Transverse colon (tissue), 4 donors: ENCODE measurements at regions of chr21 and their contacts with region 1.

Region 1: GRCh38 chr21:45973659-45974072 is 7.9 kb upstream of the COL6A1 start:
- DNase-seq: peak; percentile 76
- H3K4me3 ChIP-seq: peak overlapping the region; percentile 12 to 57 (median 35)
- H3K27ac ChIP-seq: peak overlapping the region; percentile 87 to 96 (median 90)
- H3K4me1 ChIP-seq: peaks cover 45 to 67% (median 49%) of the 10 kb centered on the region in 4 donors
- H3K27me3 ChIP-seq: peaks cover 57% of the 10 kb centered on the region
- CTCF ChIP-seq: peak; percentile 56 to 67 (median 61)
- EP300 ChIP-seq: no peak
- POLR2A ChIP-seq: peak; percentile 15

Region 2: GRCh38 chr21:45820171-45821091 is 153.2 kb before region 1 on chr21:
- in situ Hi-C with region 1: no loop called
- intact Hi-C with region 1: no loop called
- DNase-seq: peak; percentile 77
- H3K4me3 ChIP-seq: no peak overlapping the region
- H3K27ac ChIP-seq: no peak overlapping the region
- H3K4me1 ChIP-seq: peaks cover 0 to 4% (median 0%) of the 10 kb centered on the region in 4 donors
- H3K27me3 ChIP-seq: no peaks in the 10 kb centered on the region
- CTCF ChIP-seq: peak; percentile 83 to 90 (median 83)
- EP300 ChIP-seq: no peak
- POLR2A ChIP-seq: no peak

Region 3: DNA sequence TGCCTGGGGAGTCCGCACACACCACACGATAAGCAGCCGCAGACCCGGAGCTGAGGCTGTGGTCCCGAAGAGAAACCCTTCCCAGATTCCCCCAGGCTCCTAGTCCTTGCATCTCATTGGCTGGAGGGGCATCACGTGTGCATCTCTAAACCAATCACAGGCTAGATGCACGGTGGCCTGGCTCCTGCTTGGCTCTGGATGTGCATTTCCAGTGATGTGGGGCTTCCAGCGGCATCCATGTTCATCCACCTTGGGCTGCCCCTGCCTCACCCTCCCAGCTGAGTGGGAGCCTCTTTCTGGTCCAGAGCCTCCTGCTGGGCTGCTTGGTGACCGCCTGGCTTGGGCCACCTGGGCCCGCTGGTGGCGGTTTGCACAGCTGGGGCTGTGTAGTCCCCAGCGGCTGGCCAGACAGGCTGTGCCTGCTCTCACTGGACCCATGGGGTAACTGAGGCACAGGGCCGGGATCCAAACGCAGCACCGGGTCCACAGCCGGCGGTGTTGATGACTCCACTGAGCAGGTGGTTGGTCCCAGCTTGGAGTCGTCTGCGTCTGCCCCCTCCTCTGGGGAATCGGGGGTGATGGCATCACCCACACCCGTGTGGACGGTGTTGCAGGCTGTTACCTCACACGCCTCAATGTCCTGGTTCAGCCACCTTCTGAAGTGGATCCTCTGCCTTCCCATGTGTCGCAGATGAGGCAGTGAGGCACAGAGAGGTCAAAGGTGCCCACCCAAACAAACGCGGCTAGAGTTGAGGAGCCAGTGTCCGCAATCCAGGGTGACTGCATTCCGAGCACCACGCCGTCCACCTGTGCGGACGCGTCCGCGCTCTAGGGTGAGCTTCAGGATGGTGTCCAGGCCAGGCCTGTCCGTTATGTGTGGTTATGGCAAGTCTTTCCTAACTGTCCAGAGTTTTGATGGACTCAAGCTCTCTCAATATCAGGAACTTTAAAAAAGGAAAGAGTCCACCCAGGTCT is 49.2 kb after region 1 on chr21:
- in situ Hi-C with region 1: no loop called
- intact Hi-C with region 1: loop called (anchors 10 kb)
- DNase-seq: no peak
- H3K4me3 ChIP-seq: no peak overlapping the region
- H3K27ac ChIP-seq: peak overlapping the region; percentile 82 to 90 (median 86)
- H3K4me1 ChIP-seq: peaks cover 15 to 52% (median 16%) of the 10 kb centered on the region in 4 donors
- H3K27me3 ChIP-seq: no peaks in the 10 kb centered on the region
- CTCF ChIP-seq: no peak
- EP300 ChIP-seq: no peak
- POLR2A ChIP-seq: no peak

Region 4: GRCh38 chr21:46097336-46098293 is 123.9 kb after region 1 on chr21 and contains the start of gene COL6A2:
- in situ Hi-C with region 1: loop called in 1 of 4 experiments (anchors 25 kb)
- intact Hi-C with region 1: loop called (anchors 1 kb)
- DNase-seq: peak; percentile 52
- H3K4me3 ChIP-seq: peak within 1 kb of the TSS; percentile 55 to 83 (median 65)
- H3K27ac ChIP-seq: peak within 1 kb of the TSS; percentile 89 to 98 (median 94)
- H3K4me1 ChIP-seq: peaks cover 12 to 21% (median 18%) of the 10 kb centered on the region in 4 donors
- H3K27me3 ChIP-seq: peaks cover 53% of the 10 kb centered on the region
- CTCF ChIP-seq: peak in 2 of 5 experiments; percentile 29 to 31
- EP300 ChIP-seq: no peak
- POLR2A ChIP-seq: peak; percentile 57
- total RNA-seq, gene COL6A2: 172 to 550 (median 346) TPM

Region 5: GRCh38 chr21:46110499-46111192 is 137.0 kb after region 1 on chr21:
- in situ Hi-C with region 1: loop called in 1 of 4 experiments (anchors 25 kb)
- intact Hi-C with region 1: loop called (anchors 5 kb)
- DNase-seq: peak; percentile 26
- H3K4me3 ChIP-seq: no peak overlapping the region
- H3K27ac ChIP-seq: peak overlapping the region in 3 of 4 donors; percentile 52 to 69 (median 69)
- H3K4me1 ChIP-seq: peaks cover 13 to 27% (median 18%) of the 10 kb centered on the region in 4 donors
- H3K27me3 ChIP-seq: no peaks in the 10 kb centered on the region
- CTCF ChIP-seq: no peak
- EP300 ChIP-seq: no peak
- POLR2A ChIP-seq: no peak

Region 6: DNA sequence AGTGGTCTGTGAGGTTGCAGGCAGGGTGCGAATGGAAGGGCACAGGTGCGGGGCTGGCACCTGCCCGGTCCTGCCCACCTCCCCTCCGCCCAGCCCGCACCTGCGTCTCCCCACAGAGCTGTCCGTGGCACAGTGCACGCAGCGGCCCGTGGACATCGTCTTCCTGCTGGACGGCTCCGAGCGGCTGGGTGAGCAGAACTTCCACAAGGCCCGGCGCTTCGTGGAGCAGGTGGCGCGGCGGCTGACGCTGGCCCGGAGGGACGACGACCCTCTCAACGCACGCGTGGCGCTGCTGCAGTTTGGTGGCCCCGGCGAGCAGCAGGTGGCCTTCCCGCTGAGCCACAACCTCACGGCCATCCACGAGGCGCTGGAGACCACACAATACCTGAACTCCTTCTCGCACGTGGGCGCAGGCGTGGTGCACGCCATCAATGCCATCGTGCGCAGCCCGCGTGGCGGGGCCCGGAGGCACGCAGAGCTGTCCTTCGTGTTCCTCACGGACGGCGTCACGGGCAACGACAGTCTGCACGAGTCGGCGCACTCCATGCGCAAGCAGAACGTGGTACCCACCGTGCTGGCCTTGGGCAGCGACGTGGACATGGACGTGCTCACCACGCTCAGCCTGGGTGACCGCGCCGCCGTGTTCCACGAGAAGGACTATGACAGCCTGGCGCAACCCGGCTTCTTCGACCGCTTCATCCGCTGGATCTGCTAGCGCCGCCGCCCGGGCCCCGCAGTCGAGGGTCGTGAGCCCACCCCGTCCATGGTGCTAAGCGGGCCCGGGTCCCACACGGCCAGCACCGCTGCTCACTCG is 158.4 kb after region 1 on chr21:
- in situ Hi-C with region 1: no loop called
- intact Hi-C with region 1: no loop called
- DNase-seq: no peak
- H3K4me3 ChIP-seq: no peak overlapping the region
- H3K27ac ChIP-seq: no peak overlapping the region
- H3K4me1 ChIP-seq: no peaks in the 10 kb centered on the region
- H3K27me3 ChIP-seq: no peaks in the 10 kb centered on the region
- CTCF ChIP-seq: no peak
- EP300 ChIP-seq: no peak
- POLR2A ChIP-seq: no peak

Region 7: GRCh38 chr21:46228345-46229051 is 254.8 kb after region 1 on chr21 and contains the start of gene LSS:
- in situ Hi-C with region 1: no loop called
- intact Hi-C with region 1: loop called (anchors 2 kb)
- DNase-seq: peak; percentile 99
- H3K4me3 ChIP-seq: peak within 1 kb of the TSS; percentile 66 to 94 (median 82)
- H3K27ac ChIP-seq: peak within 1 kb of the TSS; percentile 79 to 93 (median 92)
- H3K4me1 ChIP-seq: peaks cover 14 to 29% (median 23%) of the 10 kb centered on the region in 4 donors
- H3K27me3 ChIP-seq: no peaks in the 10 kb centered on the region
- CTCF ChIP-seq: no peak
- EP300 ChIP-seq: no peak
- POLR2A ChIP-seq: peak; percentile 61
- total RNA-seq, gene LSS: 53.2 to 75.2 (median 62.3) TPM

Region 8: GRCh38 chr21:46374761-46375389 is 401.2 kb after region 1 on chr21:
- in situ Hi-C with region 1: no loop called
- intact Hi-C with region 1: no loop called
- DNase-seq: no peak
- H3K4me3 ChIP-seq: no peak overlapping the region
- H3K27ac ChIP-seq: no peak overlapping the region
- H3K4me1 ChIP-seq: no peaks in the 10 kb centered on the region
- H3K27me3 ChIP-seq: no peaks in the 10 kb centered on the region
- CTCF ChIP-seq: no peak
- EP300 ChIP-seq: no peak
- POLR2A ChIP-seq: no peak